H1 (cell line): ENCODE measurements at regions of chr12 and their contacts with region 1.

Region 1: DNA sequence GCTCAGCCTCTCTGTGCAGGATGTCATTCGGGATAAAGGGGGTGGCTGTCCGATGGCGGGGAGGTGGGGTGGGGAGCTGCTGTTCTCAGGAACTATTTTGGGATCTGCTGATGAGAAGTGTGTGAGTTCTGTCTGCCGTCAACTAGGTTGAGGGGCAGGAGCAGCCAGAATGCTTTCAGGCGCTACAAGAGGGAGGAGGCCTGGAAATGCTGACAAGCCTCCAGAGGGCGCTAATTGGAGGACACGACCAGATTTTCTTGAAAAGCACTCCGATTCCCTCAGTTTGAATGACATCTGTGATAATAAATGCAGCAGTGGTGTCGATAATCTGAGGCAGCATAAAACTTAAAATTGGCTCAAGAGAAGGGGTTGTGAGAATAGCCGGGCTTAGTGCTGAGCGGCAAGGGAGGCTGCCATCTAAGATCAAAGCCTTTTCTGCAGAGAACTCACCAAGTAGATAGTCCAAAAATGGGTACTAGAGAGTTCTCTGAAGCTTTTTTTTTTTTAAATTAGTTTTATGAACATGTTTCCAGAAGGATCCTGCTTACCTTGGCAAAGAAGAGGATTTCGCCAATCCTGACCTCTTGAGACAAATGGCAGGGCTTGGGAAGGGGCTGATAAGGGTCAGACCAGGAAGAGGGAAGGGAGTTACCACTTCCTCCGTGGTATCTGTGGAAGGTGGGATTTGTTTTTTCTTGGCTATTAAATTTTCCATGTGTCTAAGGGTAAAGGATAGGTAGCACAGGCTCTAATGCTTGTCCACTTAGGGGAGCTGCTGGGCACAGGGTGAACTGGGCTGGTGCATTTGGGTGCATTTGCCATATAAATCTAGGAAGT is 94.4 kb downstream of the CRACR2A start:
- DNase-seq: peak; percentile 21 to 68
- H3K4me3 ChIP-seq: no peak overlapping the region
- H3K27ac ChIP-seq: no peak overlapping the region
- H3K4me1 ChIP-seq: peaks cover 0 to 10% (median 2%) of the 10 kb centered on the region in 4 experiments; a peak in 2 of 7 replicates
- H3K27me3 ChIP-seq: no peaks in the 10 kb centered on the region
- CTCF ChIP-seq: peak; percentile 68 to 84 (median 77)
- EP300 ChIP-seq: no peak
- POLR2A ChIP-seq: no peak
- RAD21 ChIP-seq: peak; percentile 60 to 68

Region 2: GRCh38 chr12:3646561-3647241 is 11.8 kb before region 1 on chr12:
- CTCF ChIA-PET with region 1: interaction called, 21 read pairs
- POLR2A ChIA-PET with region 1: interaction called, 3 read pairs
- DNase-seq: no peak
- H3K4me3 ChIP-seq: no peak overlapping the region
- H3K27ac ChIP-seq: no peak overlapping the region
- H3K4me1 ChIP-seq: 0 out of 7 replicates have a peak, but pooled peaks cover 0 to 2% (median 0%) of the 10 kb centered on the region in 4 experiments
- H3K27me3 ChIP-seq: no peaks in the 10 kb centered on the region; a peak in 2 of 7 replicates
- CTCF ChIP-seq: no peak
- EP300 ChIP-seq: no peak
- POLR2A ChIP-seq: no peak
- RAD21 ChIP-seq: no peak

Region 3: DNA sequence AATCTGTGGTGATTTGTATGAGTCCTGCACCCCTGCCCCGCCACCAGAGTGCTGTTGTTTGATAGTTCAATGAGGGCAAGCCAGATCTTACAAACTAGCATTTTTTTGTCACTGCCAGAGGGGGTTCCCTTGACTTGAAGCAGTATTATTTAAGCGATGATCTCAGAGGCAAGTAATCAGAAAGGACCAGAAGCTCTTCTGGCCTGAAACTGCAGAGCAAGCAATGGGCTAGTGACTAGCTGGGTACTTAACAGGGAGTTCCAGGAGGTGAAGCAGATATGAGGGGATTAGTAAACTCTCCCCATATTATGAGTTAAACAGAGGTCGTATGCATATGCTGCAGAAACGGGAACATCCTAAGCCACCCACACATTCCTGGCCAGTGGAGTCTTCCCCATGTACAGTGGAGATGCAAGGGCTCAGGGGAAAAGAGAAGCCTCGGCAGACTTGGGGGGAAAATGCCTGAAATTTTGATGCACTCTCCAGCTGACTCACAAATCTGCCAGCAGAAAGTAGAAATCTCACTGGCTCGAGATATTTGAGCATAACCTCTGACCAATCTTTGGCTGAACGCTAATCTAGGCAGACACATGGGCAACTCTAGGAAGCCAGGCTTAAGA is 102.7 kb after region 1 on chr12:
- CTCF ChIA-PET with region 1: interaction called, 12 read pairs
- POLR2A ChIA-PET with region 1: no interaction called
- DNase-seq: no peak
- H3K4me3 ChIP-seq: no peak overlapping the region
- H3K27ac ChIP-seq: no peak overlapping the region
- H3K4me1 ChIP-seq: no peaks in the 10 kb centered on the region; a peak in 1 of 7 replicates
- H3K27me3 ChIP-seq: no peaks in the 10 kb centered on the region; a peak in 1 of 7 replicates
- CTCF ChIP-seq: no peak
- EP300 ChIP-seq: no peak
- POLR2A ChIP-seq: no peak
- RAD21 ChIP-seq: no peak

Region 4: DNA sequence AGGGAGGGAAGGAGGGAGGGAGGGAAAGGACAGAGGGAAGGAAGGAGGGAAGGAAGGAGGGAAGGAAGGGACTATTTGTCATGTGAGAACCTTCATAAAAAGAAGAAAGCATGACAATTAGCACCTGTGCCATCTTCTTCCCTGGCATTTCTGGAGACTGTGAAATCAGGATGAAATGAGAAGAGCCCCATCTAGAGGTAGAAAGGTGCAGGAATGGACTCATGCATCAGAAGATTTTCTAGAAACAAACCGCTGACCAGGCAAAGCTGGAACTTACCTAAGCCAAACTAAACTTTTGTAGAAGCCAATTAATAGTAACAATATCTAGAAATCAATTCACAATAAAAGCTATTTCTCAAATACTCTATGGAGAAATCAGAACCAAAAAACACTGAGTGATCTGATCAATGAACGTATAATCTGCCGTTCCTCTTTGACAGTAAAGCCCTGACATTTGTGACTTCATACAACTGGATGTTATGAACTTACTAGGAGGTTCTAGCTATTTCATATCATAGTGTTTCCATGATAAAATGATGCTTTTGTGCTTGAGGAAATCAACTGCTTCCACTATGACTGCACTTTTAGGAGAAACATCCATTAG is 118.8 kb after region 1 on chr12:
- CTCF ChIA-PET with region 1: interaction called, 18 read pairs
- POLR2A ChIA-PET with region 1: no interaction called
- DNase-seq: no peak
- H3K4me3 ChIP-seq: no peak overlapping the region
- H3K27ac ChIP-seq: no peak overlapping the region
- H3K4me1 ChIP-seq: peaks cover 0 to 4% (median 0%) of the 10 kb centered on the region in 4 experiments; a peak in 1 of 7 replicates
- H3K27me3 ChIP-seq: no peaks in the 10 kb centered on the region
- CTCF ChIP-seq: peak in 2 of 3 experiments; percentile 76; a peak in 3 of 4 replicates
- EP300 ChIP-seq: no peak
- POLR2A ChIP-seq: no peak
- RAD21 ChIP-seq: peak; percentile 92